T-cell (primary cell): ENCODE measurements at regions of chr1 and their contacts with region 1.

Region 1: GRCh38 chr1:240070188-240070587 is 21.5 kb upstream of the FMN2 start:
- DNase-seq: no peak
- ATAC-seq: no peak
- H3K4me3 ChIP-seq: no peak overlapping the region
- H3K4me3 Mint-ChIP-seq: no peak overlapping the region
- H3K27ac ChIP-seq: no peak overlapping the region
- H3K27ac Mint-ChIP-seq: no peak overlapping the region
- H3K4me1 ChIP-seq: no peaks in the 10 kb centered on the region
- H3K4me1 Mint-ChIP-seq: no peaks in the 10 kb centered on the region
- H3K27me3 ChIP-seq: no peaks in the 10 kb centered on the region
- H3K27me3 Mint-ChIP-seq: no peaks in the 10 kb centered on the region

Region 2: GRCh38 chr1:240104672-240105071 is 34.5 kb after region 1 on chr1:
- CTCF ChIA-PET with region 1: interaction called in 1 of 2 experiments, 10 read pairs
- POLR2A ChIA-PET with region 1: no interaction called
- DNase-seq: no peak
- ATAC-seq: no peak
- H3K4me3 ChIP-seq: no peak overlapping the region
- H3K4me3 Mint-ChIP-seq: no peak overlapping the region
- H3K27ac ChIP-seq: no peak overlapping the region
- H3K27ac Mint-ChIP-seq: no peak overlapping the region
- H3K4me1 ChIP-seq: no peaks in the 10 kb centered on the region
- H3K4me1 Mint-ChIP-seq: no peaks in the 10 kb centered on the region
- H3K27me3 ChIP-seq: peaks cover 0 to 5% of the 10 kb centered on the region in 2 experiments
- H3K27me3 Mint-ChIP-seq: peaks cover under 1 to 6% of the 10 kb centered on the region in 2 donors